Activated T-helper 1 cell treated with anti-CD3 and anti-CD28 coated beads, Interleukin-12 subunit alpha, Interleukin-12 subunit beta, Interleukin-2, Interleukin-4 antibody, amounts not matched to agents 30 ng/mL and 10 ng/mL and 1 ng/mL, durations not matched to agents 14 hours and 24 hours and 36 hours (primary cell): ENCODE measurements at regions of chr9 and their contacts with region 1.

Region 1: GRCh38 chr9:126985870-126986498 is 71.4 kb downstream of the RALGPS1 start:
- DNase-seq: peak; percentile 85
- H3K4me3 Mint-ChIP-seq: peak overlapping the region; percentile 80
- H3K27ac Mint-ChIP-seq: peak overlapping the region; percentile 87
- H3K4me1 Mint-ChIP-seq: peaks cover 75% of the 10 kb centered on the region
- H3K27me3 Mint-ChIP-seq: peaks cover 32% of the 10 kb centered on the region

Region 2: DNA sequence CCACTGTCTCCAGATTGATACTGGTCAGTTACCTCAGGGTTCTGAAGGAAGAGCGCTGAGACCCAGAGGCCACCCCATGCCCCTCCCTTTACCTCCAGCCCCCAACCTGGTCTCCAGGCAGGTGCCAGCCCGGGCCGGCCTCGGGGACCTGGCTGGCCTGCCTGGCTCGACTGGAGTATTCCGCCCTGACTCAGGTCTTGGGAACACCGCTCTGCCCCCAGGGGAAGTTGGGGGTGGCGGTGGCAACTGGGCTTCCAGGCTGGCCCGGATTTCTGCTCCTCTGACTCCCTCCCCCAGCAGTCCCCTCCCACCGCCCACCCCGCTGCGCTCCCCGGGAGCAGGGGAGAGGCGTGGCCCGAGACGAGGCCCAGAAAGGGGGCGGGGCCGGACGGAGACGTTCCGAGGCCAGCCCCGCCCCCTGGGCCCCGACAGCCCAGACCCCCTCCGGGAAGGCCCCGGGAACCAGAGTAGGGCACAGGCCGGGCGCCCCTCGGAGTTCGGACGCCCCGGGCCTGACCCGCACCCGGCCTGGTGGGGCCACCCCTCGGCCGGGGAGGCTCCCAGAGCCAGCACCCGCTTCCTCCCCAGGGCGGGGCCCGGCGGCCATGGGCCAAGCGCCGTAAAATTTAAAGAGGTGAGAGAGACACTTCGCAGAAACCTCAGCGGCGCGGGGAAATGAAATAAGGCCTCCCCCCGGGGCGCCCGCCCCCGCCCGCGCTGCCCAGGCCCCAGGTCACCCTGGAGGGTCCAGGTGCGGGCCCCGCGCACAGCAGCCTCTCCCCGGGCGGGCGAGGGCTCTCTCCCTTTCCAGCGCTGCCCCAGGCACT is 263.5 kb before region 1 on chr9:
- intact Hi-C with region 1: no loop called
- DNase-seq: peak; percentile 80
- H3K4me3 Mint-ChIP-seq: peak overlapping the region; percentile 88
- H3K27ac Mint-ChIP-seq: peak overlapping the region; percentile 74
- H3K4me1 Mint-ChIP-seq: peaks cover 35% of the 10 kb centered on the region
- H3K27me3 Mint-ChIP-seq: peaks cover 10% of the 10 kb centered on the region

Region 3: DNA sequence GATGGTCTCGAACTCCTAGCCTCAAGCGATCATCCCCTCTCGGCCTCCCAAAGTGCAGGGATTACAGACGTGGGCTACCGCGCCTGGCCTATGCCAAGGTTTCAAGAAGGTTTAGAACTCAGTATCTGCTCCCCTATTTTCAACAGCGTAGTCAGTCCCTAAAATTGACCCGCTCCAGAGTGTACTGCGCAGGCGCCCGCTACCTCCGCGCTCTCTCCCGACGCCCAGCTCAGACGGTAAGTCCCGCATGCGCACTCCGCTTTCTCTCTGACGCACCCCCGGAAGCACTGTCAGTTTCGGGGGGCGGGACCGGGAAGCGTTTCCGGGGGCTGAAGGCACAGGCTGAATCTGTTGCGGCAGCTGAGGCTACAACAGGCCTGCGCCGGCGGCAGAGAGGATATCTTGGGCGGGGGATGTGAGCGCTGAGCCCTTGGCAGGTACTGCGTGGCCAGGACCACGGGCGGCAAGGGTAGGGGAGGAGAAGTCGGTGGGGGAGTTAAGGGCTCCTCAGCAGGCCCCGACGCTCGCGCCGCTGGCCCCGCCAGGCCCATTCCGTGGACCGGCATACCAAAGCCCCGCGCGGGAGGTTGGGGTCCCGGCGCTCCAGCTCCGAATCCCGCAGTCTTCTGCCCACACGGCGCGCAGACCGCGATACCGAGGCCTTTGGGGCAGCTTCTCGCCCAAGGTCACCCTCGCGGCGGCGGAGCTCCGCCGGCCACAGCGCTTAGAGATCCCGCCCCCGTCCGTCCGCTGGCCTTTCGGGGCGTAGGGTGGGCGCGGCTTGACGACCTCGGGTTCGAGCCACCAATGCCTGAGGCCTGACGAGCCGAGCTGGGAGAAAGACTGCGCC is 181.1 kb before region 1 on chr9 and contains the start of gene ZBTB43:
- intact Hi-C with region 1: loop called (anchors 1 kb)
- DNase-seq: peak; percentile 98
- H3K4me3 Mint-ChIP-seq: peak within 1 kb of the TSS; percentile 92
- H3K27ac Mint-ChIP-seq: peak within 1 kb of the TSS; percentile 99
- H3K4me1 Mint-ChIP-seq: peaks cover 27% of the 10 kb centered on the region
- H3K27me3 Mint-ChIP-seq: peaks cover 2% of the 10 kb centered on the region
- total RNA-seq, gene ZBTB43: 11.6 and 21.2 TPM in 2 replicates

Region 4: GRCh38 chr9:126999315-127000068 is 13.5 kb after region 1 on chr9:
- intact Hi-C with region 1: loop called (anchors 1 kb)
- DNase-seq: no peak
- H3K4me3 Mint-ChIP-seq: no peak overlapping the region
- H3K27ac Mint-ChIP-seq: no peak overlapping the region
- H3K4me1 Mint-ChIP-seq: peaks cover 21% of the 10 kb centered on the region
- H3K27me3 Mint-ChIP-seq: peaks cover 35% of the 10 kb centered on the region

Region 5: GRCh38 chr9:127004946-127005769 is 19.2 kb after region 1 on chr9:
- intact Hi-C with region 1: loop called (anchors 1 kb)
- DNase-seq: peak; percentile 75
- H3K4me3 Mint-ChIP-seq: peak overlapping the region; percentile 50
- H3K27ac Mint-ChIP-seq: peak overlapping the region; percentile 72
- H3K4me1 Mint-ChIP-seq: peaks cover 47% of the 10 kb centered on the region
- H3K27me3 Mint-ChIP-seq: peaks cover 10% of the 10 kb centered on the region

Region 6: DNA sequence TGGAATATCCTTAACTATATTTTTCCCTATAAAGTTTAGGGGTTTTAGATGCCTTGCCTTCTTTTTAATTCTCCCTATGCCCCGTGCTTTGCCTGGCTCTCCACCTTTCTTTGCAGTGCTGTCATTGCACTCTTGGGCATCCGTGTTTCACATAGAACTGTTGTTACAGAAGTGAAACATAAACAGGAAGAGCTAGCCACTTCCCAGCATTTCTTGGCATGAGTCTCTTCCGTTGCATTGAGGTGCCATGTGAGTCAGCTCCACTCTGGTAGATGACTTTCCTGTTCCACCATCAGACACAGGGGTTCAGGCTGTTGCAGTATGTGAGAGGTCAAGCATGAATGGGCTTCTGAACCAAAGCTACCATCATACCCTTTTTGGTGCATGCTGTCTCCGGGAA is 63.1 kb after region 1 on chr9:
- intact Hi-C with region 1: loop called (anchors 1 kb)
- DNase-seq: peak; percentile 52
- H3K4me3 Mint-ChIP-seq: peak overlapping the region; percentile 53
- H3K27ac Mint-ChIP-seq: peak overlapping the region; percentile 71
- H3K4me1 Mint-ChIP-seq: peaks cover 52% of the 10 kb centered on the region
- H3K27me3 Mint-ChIP-seq: peaks cover 6% of the 10 kb centered on the region

Region 7: GRCh38 chr9:127154390-127155191 is 168.6 kb after region 1 on chr9:
- intact Hi-C with region 1: loop called (anchors 1 kb)
- DNase-seq: no peak
- H3K4me3 Mint-ChIP-seq: no peak overlapping the region
- H3K27ac Mint-ChIP-seq: peak overlapping the region; percentile 22
- H3K4me1 Mint-ChIP-seq: peaks cover 20% of the 10 kb centered on the region
- H3K27me3 Mint-ChIP-seq: peaks cover 16% of the 10 kb centered on the region

Region 8: GRCh38 chr9:127423934-127424675 is 438.1 kb after region 1 on chr9 and contains the start of gene ZNF79:
- intact Hi-C with region 1: loop called (anchors 10 kb)
- DNase-seq: peak; percentile 92
- H3K4me3 Mint-ChIP-seq: peak within 1 kb of the TSS; percentile 99
- H3K27ac Mint-ChIP-seq: peak within 1 kb of the TSS; percentile 97
- H3K4me1 Mint-ChIP-seq: peaks cover 59% of the 10 kb centered on the region
- H3K27me3 Mint-ChIP-seq: peaks cover 3% of the 10 kb centered on the region
- total RNA-seq, gene ZNF79: 21.7 and 23.1 TPM in 2 replicates

Region 9: GRCh38 chr9:127473501-127473900 is 487.5 kb after region 1 on chr9:
- intact Hi-C with region 1: no loop called
- DNase-seq: no peak
- H3K4me3 Mint-ChIP-seq: no peak overlapping the region
- H3K27ac Mint-ChIP-seq: no peak overlapping the region
- H3K4me1 Mint-ChIP-seq: no peaks in the 10 kb centered on the region
- H3K27me3 Mint-ChIP-seq: no peaks in the 10 kb centered on the region